ENCODE measurements at regions of chr3 and their contacts with region 1.

Region 1: GRCh38 chr3:126971891-126972351 is 11.0 kb upstream of the PLXNA1 start:
- DNase-seq: peak; percentile 77
- H3K4me3 ChIP-seq: no peak overlapping the region
- H3K27ac ChIP-seq: no peak overlapping the region
- H3K4me1 ChIP-seq: peaks cover 7% of the 10 kb centered on the region; the same call in 1 of the 2 replicates
- H3K27me3 ChIP-seq: no peaks in the 10 kb centered on the region

Region 2: DNA sequence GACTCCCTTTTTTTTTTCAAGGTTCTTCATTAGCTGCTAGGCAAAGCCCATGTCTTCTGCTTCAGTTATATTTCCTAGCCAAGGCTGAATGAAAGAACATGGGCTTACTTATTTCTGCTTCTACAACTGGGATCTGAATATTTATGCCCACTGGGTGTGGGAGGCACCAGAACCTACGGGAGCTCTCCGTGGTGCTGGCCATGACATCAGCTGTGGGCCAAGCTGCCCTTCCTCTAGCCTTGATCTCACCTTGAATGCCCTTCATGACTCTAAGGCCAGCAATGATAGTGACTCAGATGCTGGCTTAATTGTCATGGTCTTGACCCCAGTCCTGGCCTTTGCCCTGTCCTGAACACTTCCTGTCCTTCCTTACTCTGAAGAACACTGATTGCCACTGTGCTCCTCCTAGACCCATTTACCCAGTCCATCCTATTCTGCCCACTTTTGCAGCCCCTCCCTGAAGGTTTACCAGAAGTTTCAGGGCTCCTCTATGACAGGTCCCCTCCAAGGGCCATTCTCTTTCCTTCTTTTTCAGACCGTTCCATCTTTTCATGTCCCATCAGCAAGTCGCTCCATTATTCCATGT is 348.7 kb after region 1 on chr3:
- in situ Hi-C with region 1: no loop called
- DNase-seq: peak; percentile 26
- H3K4me3 ChIP-seq: no peak overlapping the region
- H3K27ac ChIP-seq: no peak overlapping the region
- H3K4me1 ChIP-seq: no peaks in the 10 kb centered on the region
- H3K27me3 ChIP-seq: peaks cover 10% of the 10 kb centered on the region; the same call in 1 of the 2 replicates

Region 3: GRCh38 chr3:127455541-127456450 is 483.9 kb after region 1 on chr3:
- in situ Hi-C with region 1: loop called (anchors 10 kb)
- DNase-seq: peak; percentile 79
- H3K4me3 ChIP-seq: peak overlapping the region; percentile 65
- H3K27ac ChIP-seq: no peak overlapping the region
- H3K4me1 ChIP-seq: peaks cover 13% of the 10 kb centered on the region
- H3K27me3 ChIP-seq: peaks cover 22% of the 10 kb centered on the region; the same call in 1 of the 2 replicates